Activated T-helper 1 cell treated with anti-CD3 and anti-CD28 coated beads, Interleukin-12 subunit alpha, Interleukin-12 subunit beta, Interleukin-2, Interleukin-4 antibody, amounts not matched to agents 30 ng/mL and 10 ng/mL and 1 ng/mL, durations not matched to agents 14 hours and 24 hours and 36 hours (primary cell): ENCODE measurements at regions of chr2 and their contacts with region 1.

Region 1: DNA sequence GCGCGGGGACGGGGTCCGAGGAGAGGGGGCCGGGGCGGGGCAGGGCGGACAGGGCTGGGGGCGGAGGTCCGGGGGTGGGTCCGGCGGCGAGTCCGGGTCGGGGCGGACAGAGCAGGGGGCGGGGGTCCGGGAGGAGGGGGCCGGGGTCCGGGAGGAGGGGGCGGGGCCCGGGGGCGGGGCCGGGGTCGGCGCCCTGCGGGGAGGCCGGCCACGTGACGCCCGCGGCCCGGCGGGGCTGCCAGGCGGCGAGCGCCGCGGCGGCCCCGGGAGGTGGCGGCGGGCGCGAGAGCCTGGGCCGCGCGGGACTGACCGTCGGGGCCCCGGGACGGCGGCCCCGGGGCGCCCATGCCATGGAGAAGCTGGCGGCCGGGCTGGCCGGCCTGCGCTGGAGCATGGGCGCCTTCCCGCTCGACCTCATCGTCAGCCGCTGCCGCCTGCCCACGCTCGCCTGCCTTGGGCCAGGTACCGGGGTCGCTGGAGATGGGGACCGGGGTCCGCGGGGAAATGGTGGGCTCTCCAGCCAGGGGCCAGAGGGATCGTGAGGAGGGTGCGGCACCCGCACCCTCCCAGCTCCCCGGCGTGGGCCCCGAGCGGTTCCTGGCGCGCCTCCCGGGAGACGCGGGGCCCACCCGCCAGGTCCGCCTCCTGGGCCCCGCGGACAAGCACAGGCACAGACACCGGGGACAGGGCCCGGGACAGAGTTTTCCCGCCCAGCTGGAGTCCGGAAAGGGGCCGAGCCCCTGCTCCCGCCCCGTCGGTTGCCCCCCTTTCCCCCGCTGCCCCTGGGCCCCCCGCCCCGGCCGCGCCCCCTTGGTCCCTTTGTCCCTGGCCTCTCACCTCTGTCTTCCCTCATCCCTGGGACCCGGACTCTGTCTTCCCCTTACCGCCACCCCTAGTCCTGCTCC is at the start of gene GAREM2:
- DNase-seq: no peak
- H3K4me3 Mint-ChIP-seq: peak within 1 kb of the TSS; percentile 85
- H3K27ac Mint-ChIP-seq: peak within 1 kb of the TSS; percentile 68
- H3K4me1 Mint-ChIP-seq: peaks cover 17% of the 10 kb centered on the region
- H3K27me3 Mint-ChIP-seq: peaks cover 45% of the 10 kb centered on the region
- total RNA-seq, gene GAREM2: 6.1 and 7.4 TPM in 2 replicates

Region 2: DNA sequence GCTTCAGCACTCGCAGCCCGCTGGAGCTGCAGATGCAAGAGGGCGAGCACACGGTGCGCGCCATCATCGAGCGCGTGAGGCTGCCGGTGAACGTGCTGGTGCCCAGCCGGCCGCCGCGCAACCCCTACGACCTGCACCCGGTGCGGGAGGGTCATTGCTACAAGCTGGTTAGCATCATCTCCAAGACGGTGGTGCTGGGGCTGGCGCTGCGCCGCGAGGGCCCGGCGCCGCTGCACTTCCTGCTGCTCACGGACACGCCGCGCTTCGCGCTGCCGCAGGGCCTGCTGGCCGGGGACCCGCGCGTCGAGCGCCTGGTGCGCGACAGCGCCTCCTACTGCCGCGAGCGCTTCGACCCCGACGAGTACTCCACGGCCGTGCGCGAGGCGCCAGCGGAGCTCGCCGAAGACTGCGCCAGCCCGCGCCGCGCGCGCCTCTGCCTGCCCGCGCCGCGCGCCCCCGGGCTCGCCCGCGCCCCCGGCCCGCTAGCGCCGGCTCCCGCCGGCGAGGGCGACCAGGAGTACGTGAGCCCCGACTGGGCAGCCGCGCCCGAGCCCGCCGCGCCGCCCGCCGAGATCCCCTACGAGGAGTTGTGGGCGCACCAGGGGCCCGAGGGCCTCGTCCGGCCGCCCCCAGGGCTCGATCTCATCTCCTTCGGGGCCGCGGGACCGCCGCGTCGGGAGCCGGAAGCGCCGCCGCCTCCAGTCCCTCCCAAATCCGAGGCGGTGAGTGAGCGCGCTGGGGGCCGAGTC is 11.6 kb after region 1 on chr2:
- intact Hi-C with region 1: no loop called
- DNase-seq: peak; percentile 86
- H3K4me3 Mint-ChIP-seq: peak overlapping the region; percentile 81
- H3K27ac Mint-ChIP-seq: no peak overlapping the region
- H3K4me1 Mint-ChIP-seq: peaks cover 12% of the 10 kb centered on the region
- H3K27me3 Mint-ChIP-seq: peaks cover 22% of the 10 kb centered on the region

Region 3: DNA sequence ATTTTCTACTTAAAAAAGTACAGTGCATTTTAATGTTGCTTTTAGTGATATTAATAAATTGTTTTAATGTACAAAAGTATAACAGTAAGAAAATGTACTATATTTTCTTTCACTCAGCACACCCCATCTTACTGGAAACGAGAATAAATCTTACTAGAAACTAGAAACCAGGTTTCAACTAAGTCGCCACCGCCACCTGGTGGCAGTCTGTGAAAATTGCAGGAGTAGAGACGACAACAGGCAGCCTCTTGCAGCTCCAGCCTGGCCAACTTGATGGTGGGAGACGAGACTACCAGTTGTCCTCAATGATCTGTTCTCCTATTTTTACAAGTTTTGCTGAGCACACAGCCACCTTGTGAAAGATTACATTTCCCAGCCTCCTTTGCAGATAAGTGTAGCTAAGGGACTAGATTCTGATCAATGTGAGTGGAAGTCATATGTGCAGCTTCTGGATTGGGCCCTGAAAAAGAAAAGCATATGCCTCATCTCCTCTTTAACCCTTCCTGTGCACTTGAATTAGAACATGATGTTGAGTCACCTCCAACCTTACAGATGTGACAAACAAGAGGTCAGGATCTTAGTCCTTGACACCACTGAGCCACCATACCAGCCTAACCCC is 296.1 kb after region 1 on chr2:
- intact Hi-C with region 1: loop called (anchors 1 kb)
- DNase-seq: peak; percentile 37
- H3K4me3 Mint-ChIP-seq: no peak overlapping the region
- H3K27ac Mint-ChIP-seq: no peak overlapping the region
- H3K4me1 Mint-ChIP-seq: no peaks in the 10 kb centered on the region
- H3K27me3 Mint-ChIP-seq: no peaks in the 10 kb centered on the region